ENCODE measurements at regions of chr14 and their contacts with region 1.

Region 1: DNA sequence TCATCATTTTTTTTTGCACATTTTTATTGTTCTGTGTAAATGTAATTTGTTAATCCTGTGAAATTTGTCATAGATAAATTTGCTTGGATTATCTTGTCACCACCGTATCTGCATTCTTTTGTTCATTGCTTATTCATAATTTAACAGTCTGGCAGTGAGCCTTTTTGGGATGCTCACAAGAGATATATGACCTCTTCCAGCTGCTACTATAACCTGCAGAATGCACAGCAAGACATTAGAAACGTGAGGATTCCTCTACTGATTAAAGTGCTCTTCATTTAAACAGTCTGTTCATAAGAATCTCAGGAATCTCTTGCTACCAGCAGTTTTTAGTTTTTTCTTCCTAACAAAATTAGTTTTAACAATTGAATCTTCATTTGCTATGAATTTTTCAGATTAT is 9.1 kb downstream of the NPAS3 start:
- DNase-seq: no peak

Region 2: DNA sequence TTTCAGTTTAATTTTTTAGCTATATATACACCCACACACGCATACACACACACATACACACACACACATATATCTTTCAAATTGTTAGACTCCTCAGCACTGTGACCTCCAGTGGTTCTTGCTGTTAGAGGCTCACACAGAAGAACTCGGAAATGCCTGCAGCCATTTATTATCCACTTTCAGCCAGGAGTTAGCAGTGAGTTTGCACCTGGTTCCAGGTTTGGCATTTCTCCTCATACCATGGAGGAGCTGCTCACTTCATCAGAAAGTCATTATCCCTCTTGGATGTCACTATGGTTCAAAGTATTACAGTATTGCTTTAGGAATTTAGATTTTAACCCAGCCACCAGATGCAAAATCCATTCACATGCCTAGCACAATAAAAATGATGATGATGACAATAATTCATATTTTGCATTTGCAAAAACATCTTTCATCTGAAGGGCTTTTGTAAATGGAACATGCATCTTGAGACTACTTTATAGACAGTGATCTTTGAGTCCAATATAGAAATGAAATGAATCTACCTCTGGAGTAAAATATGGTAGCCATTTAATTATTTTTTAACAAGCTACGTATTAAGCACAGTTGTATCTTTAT is 33.2 kb after region 1 on chr14:
- intact Hi-C with region 1: loop called (anchors 5 kb)
- DNase-seq: no peak